ENCODE measurements at regions of chr15 and their contacts with region 1.

Region 1: GRCh38 chr15:70097337-70098169 is at the start of gene TLE3:
- DNase-seq: peak; percentile 99
- ATAC-seq: peak; percentile 66 to 76 (median 70)
- H3K4me3 ChIP-seq: peak within 1 kb of the TSS; percentile 59 to 93 (median 78)
- H3K27ac ChIP-seq: peak within 1 kb of the TSS; percentile 88 to 98 (median 96)
- H3K4me1 ChIP-seq: peaks cover 5 to 84% (median 61%) of the 10 kb centered on the region in 12 donors
- H3K27me3 ChIP-seq: peaks cover 0 to 10% (median 0%) of the 10 kb centered on the region in 9 donors
- CTCF ChIP-seq: peak; percentile 27 to 76 (median 56)
- POLR2A ChIP-seq: peak; percentile 83 to 94
- total RNA-seq, gene TLE3: 9.3 to 49.6 (median 16.4) TPM

Region 2: GRCh38 chr15:69462493-69463181 is 634.9 kb before region 1 on chr15:
- intact Hi-C with region 1: loop called in 1 of 10 experiments (anchors 2 kb)
- DNase-seq: peak; percentile 96
- ATAC-seq: peak; percentile 93 to 98 (median 94)
- H3K4me3 ChIP-seq: peak overlapping the region; percentile 15 to 78 (median 59)
- H3K27ac ChIP-seq: peak overlapping the region; percentile 84 to 98 (median 92)
- H3K4me1 ChIP-seq: peaks cover 0 to 36% (median 23%) of the 10 kb centered on the region in 12 donors
- H3K27me3 ChIP-seq: no peaks in the 10 kb centered on the region
- CTCF ChIP-seq: peak; percentile 70 to 99 (median 90)
- POLR2A ChIP-seq: peak in 1 of 2 donors; percentile 90

Region 3: GRCh38 chr15:69576035-69576526 is 521.5 kb before region 1 on chr15:
- intact Hi-C with region 1: loop called in 2 of 10 experiments (anchors 5 to 10 kb)
- DNase-seq: peak; percentile 48 to 83 (median 54)
- ATAC-seq: peak; percentile 70 to 89 (median 88)
- H3K4me3 ChIP-seq: no peak overlapping the region
- H3K27ac ChIP-seq: no peak overlapping the region
- H3K4me1 ChIP-seq: peaks cover 0 to 24% (median 0%) of the 10 kb centered on the region in 12 donors
- H3K27me3 ChIP-seq: peaks cover 0 to 19% (median 0%) of the 10 kb centered on the region in 9 donors
- CTCF ChIP-seq: peak; percentile 46 to 79 (median 66)
- POLR2A ChIP-seq: no peak

Region 4: DNA sequence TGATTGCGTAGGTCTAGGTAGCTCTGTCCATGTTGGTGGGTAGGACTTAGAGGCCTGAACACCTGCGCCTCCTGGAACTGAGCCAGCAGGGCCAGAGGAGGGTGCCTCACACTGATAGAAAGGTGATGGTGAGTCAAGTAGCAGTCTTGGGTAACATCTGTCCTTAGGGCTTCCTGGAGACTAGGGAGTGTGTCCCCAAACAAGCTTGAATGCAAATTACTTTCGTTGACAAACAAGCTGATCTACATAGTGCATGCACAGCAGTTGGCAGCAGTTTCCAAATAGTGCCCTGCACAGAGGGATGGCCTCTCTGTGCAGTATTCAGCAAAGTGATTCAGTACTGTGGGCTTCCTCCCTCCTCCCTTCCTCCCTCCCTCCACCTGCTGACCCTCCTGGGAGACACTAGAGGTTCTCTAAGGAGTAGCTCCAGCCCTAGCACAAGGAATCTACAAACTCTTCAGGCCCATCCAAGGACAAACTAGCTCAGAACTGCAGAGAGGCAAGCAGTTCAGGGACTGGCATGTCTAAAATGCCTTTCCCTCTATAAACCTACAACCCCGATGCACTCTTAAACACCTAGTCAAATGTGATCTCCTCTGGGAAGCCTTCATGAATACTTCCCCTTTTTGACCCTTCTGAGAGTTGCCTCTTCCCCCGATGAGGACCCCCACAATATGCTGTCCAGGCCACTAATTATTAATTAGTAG is 60.8 kb before region 1 on chr15:
- intact Hi-C with region 1: no loop called
- DNase-seq: peak in 1 of 5 donors; percentile 9
- ATAC-seq: no peak
- H3K4me3 ChIP-seq: no peak overlapping the region
- H3K27ac ChIP-seq: no peak overlapping the region
- H3K4me1 ChIP-seq: peaks cover 0 to 9% (median 0%) of the 10 kb centered on the region in 12 donors
- H3K27me3 ChIP-seq: peaks cover 0 to 33% (median 12%) of the 10 kb centered on the region in 9 donors
- CTCF ChIP-seq: no peak
- POLR2A ChIP-seq: no peak

Region 5: DNA sequence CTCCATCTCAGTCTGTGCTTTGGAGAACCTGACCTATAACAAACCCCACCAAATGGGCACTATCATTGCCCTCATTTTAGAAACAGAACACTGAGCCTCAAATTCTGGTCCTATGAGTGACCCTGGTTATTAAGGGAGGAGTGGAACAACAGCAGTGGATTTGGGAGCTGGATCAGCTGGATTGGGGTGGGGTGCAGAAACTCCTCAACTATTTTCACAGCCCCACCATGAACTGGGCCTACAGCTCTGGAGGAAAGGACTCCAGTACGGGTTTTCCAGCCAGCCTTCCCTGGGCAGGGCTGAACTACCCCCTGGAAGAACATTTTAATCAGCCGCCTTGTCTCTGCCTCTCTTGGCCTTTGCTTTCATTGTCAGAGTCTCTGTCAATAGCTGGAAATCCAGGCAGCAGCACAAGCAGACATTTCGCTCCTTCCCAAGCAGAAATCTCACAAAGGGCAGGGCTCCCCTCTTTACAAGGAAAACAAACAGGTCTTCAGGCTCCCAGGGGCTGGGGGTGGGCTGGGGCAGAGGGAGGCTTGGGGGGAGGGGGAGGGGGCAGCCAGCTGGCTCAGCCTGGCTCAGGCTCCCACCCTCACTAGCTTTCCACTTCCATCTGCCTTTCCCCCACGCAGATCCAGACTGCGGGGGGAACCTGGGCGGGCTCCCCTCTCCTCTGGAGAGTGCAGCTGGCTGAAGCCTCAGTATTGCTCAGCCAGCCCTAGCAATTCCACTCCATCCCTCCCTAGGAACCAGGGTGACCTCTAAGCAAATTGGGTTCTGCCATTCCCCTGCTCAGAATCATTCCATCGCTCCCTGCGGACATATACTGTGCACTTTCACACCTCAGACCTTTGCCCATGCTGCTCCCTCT is 13.9 kb after region 1 on chr15:
- intact Hi-C with region 1: loop called in 3 of 10 experiments (anchors 1 kb)
- DNase-seq: peak; percentile 67 to 84 (median 81)
- ATAC-seq: peak; percentile 92 to 97 (median 96)
- H3K4me3 ChIP-seq: peak overlapping the region in 9 of 12 donors; percentile 17 to 42 (median 36)
- H3K27ac ChIP-seq: peak overlapping the region; percentile 72 to 93 (median 87)
- H3K4me1 ChIP-seq: peaks cover 0 to 39% (median 13%) of the 10 kb centered on the region in 12 donors
- H3K27me3 ChIP-seq: no peaks in the 10 kb centered on the region
- CTCF ChIP-seq: no peak
- POLR2A ChIP-seq: no peak

Region 6: DNA sequence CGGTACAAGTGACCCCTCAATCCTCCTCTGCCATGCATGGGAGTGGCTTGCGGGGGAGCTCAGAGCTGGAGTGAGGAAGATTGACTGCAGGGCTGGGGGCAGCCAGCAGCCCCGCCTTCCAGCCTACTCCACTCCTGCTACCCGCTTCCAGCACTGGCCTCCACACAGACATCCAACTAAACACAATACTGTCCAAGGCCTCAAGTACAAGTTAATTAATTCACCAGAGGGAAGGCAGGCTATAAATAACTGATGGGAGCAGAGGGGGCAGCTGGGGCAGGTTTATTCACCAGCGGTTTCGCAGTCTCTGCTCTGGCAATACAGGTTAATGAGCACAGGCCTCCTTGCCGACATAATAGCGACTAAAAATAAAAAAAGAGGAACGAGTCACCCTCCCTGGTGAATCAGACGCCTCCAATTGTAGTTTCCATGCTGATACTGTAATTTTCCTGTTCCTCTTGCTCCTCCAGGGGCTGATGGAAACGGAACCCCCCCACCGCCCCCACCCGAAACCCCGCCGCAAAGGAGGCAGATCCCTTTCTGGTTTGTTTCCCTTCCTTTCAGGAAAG is 166.5 kb after region 1 on chr15:
- intact Hi-C with region 1: loop called in 6 of 10 experiments (anchors 5 to 10 kb)
- DNase-seq: peak in 2 of 5 donors; percentile 29 to 36
- ATAC-seq: peak in 3 of 4 donors; percentile 46 to 59 (median 48)
- H3K4me3 ChIP-seq: peak overlapping the region in 1 of 12 donors; percentile 9
- H3K27ac ChIP-seq: peak overlapping the region in 5 of 12 donors; percentile 3 to 75 (median 30)
- H3K4me1 ChIP-seq: peaks cover 4 to 88% (median 42%) of the 10 kb centered on the region in 12 donors
- H3K27me3 ChIP-seq: no peaks in the 10 kb centered on the region
- CTCF ChIP-seq: no peak
- POLR2A ChIP-seq: no peak

Region 7: GRCh38 chr15:70355275-70355795 is 257.8 kb after region 1 on chr15:
- intact Hi-C with region 1: loop called in 2 of 10 experiments (anchors 10 kb)
- DNase-seq: no peak
- ATAC-seq: no peak
- H3K4me3 ChIP-seq: no peak overlapping the region
- H3K27ac ChIP-seq: no peak overlapping the region
- H3K4me1 ChIP-seq: no peaks in the 10 kb centered on the region
- H3K27me3 ChIP-seq: peaks cover 0 to 6% (median 0%) of the 10 kb centered on the region in 9 donors
- CTCF ChIP-seq: no peak
- POLR2A ChIP-seq: no peak

Region 8: DNA sequence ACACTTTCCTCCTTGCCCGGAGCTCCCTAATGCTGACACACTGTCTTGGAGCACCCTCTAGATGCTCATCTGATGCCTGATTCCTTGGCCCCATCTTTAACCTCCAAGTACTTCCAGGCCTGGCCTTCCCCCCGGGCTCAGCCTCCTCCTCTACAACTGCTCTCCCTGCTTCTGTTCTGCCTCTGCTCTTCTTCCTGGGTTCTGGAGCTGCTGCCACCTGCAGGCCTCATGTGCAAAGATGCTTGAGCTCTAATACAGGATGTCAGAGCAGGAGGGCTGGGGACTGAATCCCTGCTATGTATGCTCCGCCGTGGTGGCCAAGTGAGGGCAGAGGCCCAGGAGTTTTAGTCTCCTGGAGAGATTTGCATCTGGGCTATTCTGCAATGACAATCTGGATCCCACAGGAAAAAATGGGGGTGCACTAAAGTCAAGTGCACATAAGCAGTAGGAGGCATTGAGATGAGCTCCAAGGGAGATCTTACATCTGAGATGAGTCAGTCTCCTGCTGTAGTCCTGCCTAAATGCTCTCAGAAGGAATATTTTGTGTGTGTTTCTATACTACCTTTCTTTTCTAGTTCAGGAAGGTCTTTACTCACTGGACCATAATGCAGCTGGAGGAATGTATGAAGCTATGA is 369.5 kb after region 1 on chr15:
- intact Hi-C with region 1: loop called in 3 of 10 experiments (anchors 5 to 10 kb)
- DNase-seq: peak in 4 of 5 donors; percentile 33 to 68 (median 41)
- ATAC-seq: peak; percentile 62 to 84 (median 74)
- H3K4me3 ChIP-seq: no peak overlapping the region
- H3K27ac ChIP-seq: no peak overlapping the region
- H3K4me1 ChIP-seq: peaks cover 0 to 15% (median 0%) of the 10 kb centered on the region in 12 donors
- H3K27me3 ChIP-seq: peaks cover 0 to 23% (median 2%) of the 10 kb centered on the region in 9 donors
- CTCF ChIP-seq: peak; percentile 39 to 71 (median 50)
- POLR2A ChIP-seq: no peak